ENCODE measurements at regions of chr20 and their contacts with region 1.

Region 1: GRCh38 chr20:51128198-51128597 is 105.3 kb upstream of the KCNG1 start:
- DNase-seq: no peak
- H3K4me3 ChIP-seq: no peak overlapping the region
- H3K27ac ChIP-seq: peak overlapping the region; percentile 26 to 99; a peak in 3 of 4 replicates
- H3K4me1 ChIP-seq: peaks cover 16 to 65% of the 10 kb centered on the region in 2 experiments; a peak in 3 of 4 replicates
- H3K27me3 ChIP-seq: no peaks in the 10 kb centered on the region
- CTCF ChIP-seq: no peak
- EP300 ChIP-seq: no peak
- RAD21 ChIP-seq: no peak

Region 2: DNA sequence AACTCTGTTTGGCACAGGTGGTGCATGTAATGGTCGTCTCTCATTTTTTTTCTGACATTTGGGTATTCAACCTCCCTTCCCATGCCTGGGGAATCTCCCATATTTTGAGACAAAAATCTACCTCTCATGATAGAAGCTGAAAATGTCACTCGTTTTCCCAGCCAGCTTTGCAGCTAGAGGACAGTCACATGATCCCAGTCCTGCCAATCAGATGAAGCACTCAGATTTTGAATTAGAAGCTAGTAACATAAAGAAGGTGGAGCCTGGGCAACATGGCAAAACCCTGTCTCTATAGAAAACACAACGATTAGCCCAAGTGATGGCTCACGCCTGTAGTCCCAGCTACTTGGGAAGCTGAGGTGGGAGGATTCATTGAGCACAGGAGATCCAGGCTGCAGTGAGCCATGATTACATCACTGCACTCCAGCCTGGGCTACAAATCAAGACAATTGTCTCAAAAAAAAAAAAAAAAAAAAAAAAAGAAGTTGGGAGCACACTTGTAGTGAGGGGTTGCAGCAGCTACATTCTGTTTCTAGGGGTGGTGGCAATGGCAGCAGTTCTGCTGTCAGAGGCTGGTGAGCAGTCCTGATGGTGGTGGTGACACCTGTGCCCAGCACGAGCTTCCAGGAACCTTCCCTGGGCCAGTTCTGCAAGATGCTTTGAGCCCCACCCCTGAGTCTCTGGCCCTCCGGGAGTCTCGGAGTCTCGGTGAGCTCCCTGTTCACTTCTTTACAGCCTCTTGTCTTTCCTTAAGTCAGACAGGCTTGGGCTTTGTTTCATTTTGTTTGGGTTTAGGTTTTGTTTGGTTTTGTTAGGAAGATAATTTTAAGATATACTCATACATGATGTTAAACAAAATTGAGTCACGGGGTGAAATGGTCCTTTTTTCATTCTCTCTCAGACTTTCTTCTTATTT is 11.2 kb before region 1 on chr20:
- CTCF ChIA-PET with region 1: interaction called, 4 read pairs
- POLR2A ChIA-PET with region 1: interaction called, 12 read pairs
- DNase-seq: no peak
- H3K4me3 ChIP-seq: no peak overlapping the region; a peak in 1 of 4 replicates
- H3K27ac ChIP-seq: peak overlapping the region in 1 of 2 experiments; percentile 34; a peak in 1 of 4 replicates
- H3K4me1 ChIP-seq: peaks cover 10 to 34% of the 10 kb centered on the region in 2 experiments; a peak in 3 of 4 replicates
- H3K27me3 ChIP-seq: no peaks in the 10 kb centered on the region; the same call in 1 of the 2 replicates
- CTCF ChIP-seq: no peak
- EP300 ChIP-seq: no peak
- RAD21 ChIP-seq: no peak

Region 3: DNA sequence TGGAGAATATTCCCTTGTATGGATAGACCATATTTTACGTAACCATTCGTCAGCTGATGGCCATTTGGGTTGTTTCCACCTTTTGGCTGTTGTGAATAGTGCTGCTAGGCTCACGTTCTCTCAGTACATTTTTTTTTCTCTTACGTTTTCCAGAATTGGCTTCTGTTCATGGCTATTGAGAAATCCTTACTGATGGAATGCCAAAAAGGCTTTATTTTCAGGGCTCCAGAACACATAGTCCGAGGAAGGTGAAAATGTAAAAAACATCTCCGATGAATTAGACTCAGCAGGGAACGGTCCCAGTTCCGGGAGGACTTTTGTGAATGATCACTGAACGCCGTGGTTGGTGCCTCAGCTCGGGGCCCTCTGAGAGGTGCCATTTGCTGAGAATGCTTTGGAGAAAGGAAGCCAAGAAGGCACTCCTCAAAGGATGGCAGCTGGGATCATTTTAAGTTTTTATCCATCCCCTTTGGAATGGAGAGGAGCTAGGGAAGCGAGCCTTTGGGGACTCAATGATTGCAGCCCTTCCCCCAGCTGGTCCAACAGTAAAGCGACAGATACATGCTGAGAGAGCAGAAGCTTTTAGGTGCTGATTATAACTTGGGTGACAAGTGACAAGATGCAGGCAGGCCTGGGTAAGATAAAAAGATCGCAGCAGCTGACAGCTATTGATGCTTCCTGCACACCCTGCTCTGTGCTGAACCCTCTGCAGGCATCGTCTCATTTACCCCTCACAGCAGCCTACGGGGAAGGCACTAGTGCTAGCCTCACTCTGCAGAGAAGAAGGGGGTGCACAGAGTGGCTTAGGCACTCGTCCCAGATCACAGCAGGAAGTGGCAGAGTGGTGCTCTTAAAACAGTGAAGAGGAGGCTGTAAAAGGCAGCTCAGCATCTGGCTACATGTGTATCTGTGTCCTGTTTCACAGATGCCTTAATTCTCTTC is 28.1 kb after region 1 on chr20:
- CTCF ChIA-PET with region 1: interaction called, 14 read pairs
- POLR2A ChIA-PET with region 1: interaction called, 42 read pairs
- DNase-seq: peak; percentile 77
- H3K4me3 ChIP-seq: no peak overlapping the region
- H3K27ac ChIP-seq: peak overlapping the region in 1 of 2 experiments; percentile 99; a peak in 2 of 4 replicates
- H3K4me1 ChIP-seq: peaks cover 0 to 47% of the 10 kb centered on the region in 2 experiments; a peak in 2 of 4 replicates
- H3K27me3 ChIP-seq: peaks cover 44% of the 10 kb centered on the region
- CTCF ChIP-seq: no peak
- EP300 ChIP-seq: peak in 1 of 2 experiments; percentile 99; a peak in 2 of 4 replicates
- RAD21 ChIP-seq: peak; percentile 35; the same call in 1 of the 2 replicates